Dendritic cell treated with granulocyte-macrophage colony-stimulating factor and Interleukin-4, amounts not matched to agents 40 ng/mL and 50 ng/mL, for 4 days (primary cell): ENCODE measurements at regions of chr15 and their contacts with region 1.

Region 1: GRCh38 chr15:60315878-60316277 is 81.9 kb downstream of the ANXA2 start:
- H3K4me3 Mint-ChIP-seq: no peak overlapping the region
- H3K27ac Mint-ChIP-seq: no peak overlapping the region
- H3K4me1 Mint-ChIP-seq: peaks cover 8% of the 10 kb centered on the region
- H3K27me3 Mint-ChIP-seq: no peaks in the 10 kb centered on the region

Region 2: DNA sequence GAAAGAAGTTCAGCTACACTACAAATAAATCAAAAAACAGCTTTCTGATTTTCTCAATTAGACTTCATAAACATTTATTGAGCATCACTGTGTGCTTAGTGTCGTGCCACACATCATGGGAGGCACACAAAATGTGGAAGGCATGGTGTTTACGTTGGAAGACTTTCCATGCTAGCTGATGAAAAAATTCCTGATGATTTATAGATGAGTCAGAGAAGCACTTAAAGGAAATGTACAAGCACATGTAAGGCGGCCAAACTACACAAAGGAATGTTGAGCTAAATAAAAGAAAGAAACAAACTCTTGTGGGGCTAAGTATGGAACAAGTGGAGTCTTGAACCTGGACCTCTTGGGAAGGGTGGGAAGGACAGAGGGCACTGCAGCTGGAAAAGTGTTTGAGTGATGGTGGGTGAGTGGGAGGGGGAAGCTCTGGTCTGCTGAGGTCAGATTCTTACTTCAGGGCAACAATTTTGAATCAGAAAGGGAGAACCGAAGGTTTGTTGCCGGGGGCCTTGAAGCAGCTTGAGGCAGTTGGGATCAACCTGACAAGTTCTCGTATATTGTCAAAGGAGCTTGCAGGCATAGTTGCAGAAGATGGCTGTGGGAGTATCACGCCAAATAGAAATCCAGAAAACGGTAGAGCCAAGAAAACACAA is 244.9 kb before region 1 on chr15:
- intact Hi-C with region 1: no loop called
- H3K4me3 Mint-ChIP-seq: no peak overlapping the region
- H3K27ac Mint-ChIP-seq: no peak overlapping the region
- H3K4me1 Mint-ChIP-seq: no peaks in the 10 kb centered on the region
- H3K27me3 Mint-ChIP-seq: peaks cover 3% of the 10 kb centered on the region

Region 3: GRCh38 chr15:60137711-60138396 is 178.0 kb before region 1 on chr15:
- intact Hi-C with region 1: loop called (anchors 10 kb)
- H3K4me3 Mint-ChIP-seq: no peak overlapping the region
- H3K27ac Mint-ChIP-seq: no peak overlapping the region
- H3K4me1 Mint-ChIP-seq: no peaks in the 10 kb centered on the region
- H3K27me3 Mint-ChIP-seq: peaks cover 7% of the 10 kb centered on the region

Region 4: DNA sequence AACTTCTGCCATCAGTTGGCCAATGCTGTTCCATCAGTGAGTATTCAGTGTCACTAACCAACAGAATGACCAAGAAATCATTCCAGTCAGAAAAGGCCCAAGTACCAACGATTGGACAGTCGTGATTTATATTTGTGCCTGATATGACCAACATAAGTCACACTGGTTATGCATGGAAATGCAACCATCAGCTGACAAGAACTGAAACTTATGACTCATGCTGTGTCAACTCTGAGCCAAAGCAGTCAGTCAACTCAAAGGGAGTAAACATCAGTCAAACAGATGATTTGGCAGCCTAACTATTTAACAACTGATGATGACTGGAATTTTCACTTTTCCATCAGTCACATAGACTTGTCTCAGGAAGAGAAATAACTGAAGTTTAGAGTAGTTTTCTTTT is 60.5 kb before region 1 on chr15:
- intact Hi-C with region 1: no loop called
- H3K4me3 Mint-ChIP-seq: no peak overlapping the region
- H3K27ac Mint-ChIP-seq: peak overlapping the region; percentile 32
- H3K4me1 Mint-ChIP-seq: peaks cover 10% of the 10 kb centered on the region
- H3K27me3 Mint-ChIP-seq: peaks cover 8% of the 10 kb centered on the region

Region 5: DNA sequence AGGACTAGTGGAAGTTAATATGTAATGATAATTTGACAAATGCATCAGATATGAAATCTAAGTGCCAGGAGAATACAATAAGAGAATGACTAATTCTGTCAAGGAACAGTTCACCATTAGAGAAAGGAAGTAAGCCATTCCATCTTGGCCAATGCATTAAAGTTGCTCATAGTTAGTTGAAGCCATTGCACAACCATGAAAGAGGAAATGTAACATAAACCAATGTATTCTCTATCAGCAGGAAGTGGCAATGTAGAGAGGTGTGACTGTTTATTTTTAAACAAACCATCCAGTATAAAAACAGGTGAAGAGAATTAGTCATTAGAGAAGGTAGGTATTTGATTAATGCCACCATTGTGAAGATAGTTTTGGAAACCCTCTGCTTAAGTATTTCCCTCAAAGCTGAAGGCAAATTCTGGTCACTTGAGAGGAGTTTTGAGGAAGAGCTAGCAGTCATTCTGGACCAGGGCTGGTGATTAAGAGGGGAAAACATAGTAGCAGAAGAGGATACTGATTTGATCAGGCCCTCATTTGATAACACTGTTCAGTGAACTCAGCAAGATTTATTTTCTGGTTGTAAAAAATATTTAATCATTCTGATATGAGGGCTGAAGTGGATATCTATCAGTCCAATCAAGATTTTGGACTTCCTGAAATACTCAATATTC is 92.7 kb after region 1 on chr15:
- intact Hi-C with region 1: no loop called
- H3K4me3 Mint-ChIP-seq: no peak overlapping the region
- H3K27ac Mint-ChIP-seq: peak overlapping the region; percentile 87
- H3K4me1 Mint-ChIP-seq: peaks cover 31% of the 10 kb centered on the region
- H3K27me3 Mint-ChIP-seq: no peaks in the 10 kb centered on the region

Region 6: DNA sequence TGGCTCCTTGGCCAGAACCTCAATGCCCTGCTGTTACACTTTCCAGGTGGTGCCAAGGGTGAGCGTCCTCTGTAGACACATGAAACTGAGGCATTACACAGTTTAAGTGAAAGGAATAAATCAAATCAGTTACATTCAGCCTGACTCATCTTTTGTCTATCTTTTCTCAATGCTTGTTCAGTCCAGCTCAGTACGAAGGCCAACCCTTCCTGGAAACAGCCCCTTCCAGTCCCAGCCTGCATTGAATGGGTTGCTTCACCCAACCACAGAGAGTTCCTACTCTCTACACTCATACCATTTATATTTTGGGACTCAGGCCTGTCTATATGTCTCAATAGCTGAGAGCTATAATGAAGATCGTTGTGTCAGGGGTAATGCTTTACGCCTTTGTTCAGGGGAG is 549.6 kb after region 1 on chr15:
- intact Hi-C with region 1: no loop called
- H3K4me3 Mint-ChIP-seq: no peak overlapping the region
- H3K27ac Mint-ChIP-seq: no peak overlapping the region
- H3K4me1 Mint-ChIP-seq: no peaks in the 10 kb centered on the region
- H3K27me3 Mint-ChIP-seq: peaks cover 1% of the 10 kb centered on the region